ENCODE measurements at regions of chr6 and their contacts with region 1.

Region 1: DNA sequence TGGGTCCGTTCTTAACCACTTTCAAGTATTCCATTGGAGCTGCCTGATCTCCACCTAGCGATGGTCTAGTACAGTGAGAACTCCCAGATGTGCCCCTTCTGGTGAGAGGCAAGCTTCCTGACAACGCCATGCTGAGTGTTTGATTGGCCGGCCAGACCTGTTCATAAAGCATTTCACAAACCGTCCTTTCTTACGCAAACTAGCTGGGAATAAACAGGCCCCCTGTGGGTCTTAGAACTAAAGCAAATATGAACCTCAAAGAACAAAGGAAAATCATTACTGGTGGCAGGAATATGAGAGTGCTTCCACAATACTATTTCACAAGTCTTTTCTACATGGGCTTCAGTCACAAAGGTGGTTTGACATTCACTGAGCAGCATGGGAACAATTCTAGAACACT is 15.6 kb upstream of the GCNT2 start:
- DNase-seq: no peak
- ATAC-seq: no peak

Region 2: DNA sequence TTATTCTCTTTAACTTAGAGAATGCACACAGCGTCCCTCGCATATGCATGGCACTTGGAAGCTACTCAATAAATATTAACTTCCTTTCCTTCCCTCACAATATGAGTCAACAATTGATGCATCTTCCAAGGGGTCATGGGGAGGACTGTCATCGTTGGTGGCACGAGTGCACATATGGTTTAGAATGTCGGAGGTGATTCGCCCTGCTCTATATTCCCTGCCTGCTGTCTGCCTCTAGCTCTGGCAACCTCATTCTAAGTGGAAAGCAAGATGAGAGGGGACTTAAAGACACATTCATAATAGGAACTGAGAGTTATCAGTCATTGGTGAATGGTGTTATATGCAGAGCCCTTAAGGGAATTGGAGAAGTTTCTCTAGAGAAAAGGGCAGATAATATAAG is 288.2 kb after region 1 on chr6:
- intact Hi-C with region 1: loop called (anchors 10 kb)
- DNase-seq: no peak
- ATAC-seq: no peak